Dorsolateral prefrontal cortex (tissue), 120 donors: ENCODE measurements at regions of chr9 and their contacts with region 1.

Region 1: GRCh38 chr9:134738869-134739659 is 97.5 kb downstream of the COL5A1 start:
- DNase-seq: peak; percentile 69 to 90 (median 83)
- H3K4me3 ChIP-seq: no peak overlapping the region
- H3K27ac ChIP-seq: peak overlapping the region in 1 of 59 donors; percentile 26
- H3K27me3 ChIP-seq: no peaks in the 10 kb centered on the region
- CTCF ChIP-seq: peak; percentile 76 to 97 (median 92)

Region 2: DNA sequence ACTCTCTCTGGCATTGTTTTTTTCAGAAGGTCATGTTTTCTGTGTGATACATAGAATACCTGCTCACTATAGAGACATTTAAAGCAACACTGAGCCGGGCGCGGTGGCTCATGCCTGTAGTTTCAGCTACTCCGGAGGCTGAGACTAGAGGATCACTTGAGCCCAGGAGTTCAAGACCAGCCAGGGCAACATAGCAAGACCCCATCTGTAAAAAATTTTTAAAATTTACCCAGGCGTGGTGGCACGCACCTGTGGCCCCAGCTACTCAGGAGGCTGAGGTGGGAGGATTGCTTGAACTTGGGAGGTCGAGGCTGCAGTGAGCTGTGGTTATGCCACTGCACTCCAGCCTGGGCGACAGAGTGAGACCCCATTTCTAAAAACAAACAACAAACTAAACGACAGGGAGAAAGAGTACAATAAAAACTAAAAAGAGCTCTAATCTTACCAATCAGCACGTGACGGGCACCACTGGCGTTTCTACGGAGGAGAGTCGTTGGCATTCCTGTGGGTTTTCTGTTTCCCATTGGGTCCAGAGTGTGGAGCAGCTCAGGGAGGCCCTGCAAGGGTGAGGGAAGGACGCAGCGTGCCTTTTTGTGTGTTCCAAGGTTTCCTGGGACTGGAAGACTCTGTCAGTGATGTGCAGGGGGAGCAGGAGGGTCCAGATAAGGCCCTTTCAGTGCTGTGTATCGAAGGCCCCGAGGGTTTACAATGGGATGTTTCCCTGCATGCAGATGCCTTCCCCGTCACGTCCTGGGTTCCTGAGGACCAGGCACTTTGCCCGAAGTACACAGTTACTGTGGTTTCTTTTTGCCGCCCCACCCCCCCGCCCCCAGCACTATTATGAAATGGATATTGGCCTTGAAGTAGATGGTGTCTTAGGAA is 567.5 kb before region 1 on chr9:
- intact Hi-C with region 1: loop called (anchors 5 to 10 kb)
- DNase-seq: no peak
- H3K4me3 ChIP-seq: no peak overlapping the region
- H3K27ac ChIP-seq: peak overlapping the region in 2 of 59 donors; percentile 47 to 65
- H3K27me3 ChIP-seq: peaks cover 0 to 22% (median 0%) of the 10 kb centered on the region in 45 donors
- CTCF ChIP-seq: no peak

Region 3: DNA sequence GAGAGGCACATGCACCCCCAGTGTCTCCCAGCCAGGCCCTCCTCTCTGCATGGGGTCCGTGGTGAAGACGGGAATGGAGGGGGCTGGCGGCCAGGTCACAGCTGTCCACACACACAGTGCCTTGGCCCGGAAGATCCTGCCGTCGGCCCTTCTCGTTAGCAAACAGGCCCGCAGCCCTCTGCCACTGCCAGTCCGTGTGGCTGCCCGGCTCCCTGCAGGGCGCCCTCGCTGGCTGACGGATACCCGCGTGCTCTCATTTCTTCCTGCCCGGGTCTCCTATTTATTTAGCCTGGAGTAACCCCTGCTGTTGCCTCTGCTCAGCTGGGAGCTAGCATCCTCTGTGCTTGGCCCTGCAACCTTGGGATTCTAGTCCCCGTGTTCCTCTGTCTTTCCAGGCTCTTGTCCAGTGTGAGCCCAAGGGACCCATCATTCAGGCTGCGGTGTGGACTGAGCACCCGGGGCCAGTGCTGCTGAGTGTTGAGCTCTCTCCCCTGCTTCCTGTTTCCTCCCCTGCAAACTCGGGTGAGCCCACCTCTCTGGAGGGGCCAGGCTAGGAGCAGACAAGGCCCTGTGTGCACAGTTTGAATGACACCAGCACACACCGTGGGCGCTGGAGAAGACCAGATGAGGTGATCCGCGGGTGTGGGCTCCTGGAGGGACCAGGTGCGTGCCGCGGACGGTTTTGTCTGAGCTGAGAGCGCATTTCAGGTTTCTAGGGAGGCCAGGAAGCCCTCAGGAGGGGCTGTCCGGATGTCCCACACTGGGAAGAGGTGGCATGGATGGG is 560.1 kb before region 1 on chr9:
- intact Hi-C with region 1: loop called (anchors 5 to 10 kb)
- DNase-seq: peak in 3 of 10 donors; percentile 17 to 46 (median 45)
- H3K4me3 ChIP-seq: no peak overlapping the region
- H3K27ac ChIP-seq: no peak overlapping the region
- H3K27me3 ChIP-seq: peaks cover 0 to 29% (median 0%) of the 10 kb centered on the region in 45 donors
- CTCF ChIP-seq: no peak

Region 4: GRCh38 chr9:134449221-134449894 is 289.7 kb before region 1 on chr9:
- intact Hi-C with region 1: loop called (anchors 1 to 2 kb)
- DNase-seq: peak; percentile 75 to 96 (median 92)
- H3K4me3 ChIP-seq: no peak overlapping the region
- H3K27ac ChIP-seq: peak overlapping the region in 16 of 59 donors; percentile 3 to 65 (median 29)
- H3K27me3 ChIP-seq: no peaks in the 10 kb centered on the region
- CTCF ChIP-seq: peak; percentile 63 to 98 (median 92)

Region 5: DNA sequence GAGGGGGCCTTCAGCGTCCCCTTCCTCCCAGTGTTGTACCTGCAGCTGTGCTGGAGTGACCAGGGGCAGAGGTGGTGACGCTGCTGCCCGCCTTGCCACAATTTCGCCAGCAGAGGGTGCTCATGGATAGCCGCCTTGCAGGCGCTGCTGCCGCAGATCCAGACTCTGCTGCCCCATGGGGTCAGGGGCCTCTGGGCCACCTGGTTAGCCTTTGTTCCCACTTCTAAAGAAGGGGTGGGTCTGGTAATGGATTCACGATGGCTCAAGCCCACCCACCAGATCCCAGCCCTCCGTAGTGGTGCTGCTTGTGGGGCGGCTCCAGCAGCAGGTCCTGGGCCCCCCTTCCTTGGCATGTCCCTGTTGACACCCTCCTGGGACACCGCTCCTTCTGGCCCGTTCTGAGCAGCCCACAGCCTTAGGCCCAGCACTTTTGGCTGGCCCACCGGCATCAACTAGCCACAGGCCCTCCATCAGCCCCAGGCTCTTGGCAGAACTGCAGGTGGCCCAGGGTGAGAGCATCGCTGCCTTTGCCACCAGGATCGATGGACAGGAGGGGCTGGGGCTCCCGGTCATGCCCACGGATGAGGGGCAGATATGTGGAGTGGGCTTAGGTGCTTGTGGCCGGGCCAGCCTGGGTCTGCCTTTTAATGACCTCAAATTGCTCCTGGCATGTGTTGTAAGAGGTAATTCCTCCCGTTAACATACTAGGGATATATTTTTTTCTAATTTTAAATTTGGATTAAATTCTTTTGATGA is 40.3 kb before region 1 on chr9:
- intact Hi-C with region 1: loop called (anchors 1 to 2 kb)
- DNase-seq: peak in 9 of 10 donors; percentile 43 to 81 (median 55)
- H3K4me3 ChIP-seq: no peak overlapping the region
- H3K27ac ChIP-seq: no peak overlapping the region
- H3K27me3 ChIP-seq: no peaks in the 10 kb centered on the region
- CTCF ChIP-seq: peak; percentile 41 to 93 (median 87)

Region 6: GRCh38 chr9:134852906-134853654 is 114.0 kb after region 1 on chr9:
- intact Hi-C with region 1: no loop called
- DNase-seq: peak in 1 of 10 donors; percentile 34
- H3K4me3 ChIP-seq: no peak overlapping the region
- H3K27ac ChIP-seq: no peak overlapping the region
- H3K27me3 ChIP-seq: peaks cover 0 to 12% (median 0%) of the 10 kb centered on the region in 45 donors
- CTCF ChIP-seq: no peak

Region 7: DNA sequence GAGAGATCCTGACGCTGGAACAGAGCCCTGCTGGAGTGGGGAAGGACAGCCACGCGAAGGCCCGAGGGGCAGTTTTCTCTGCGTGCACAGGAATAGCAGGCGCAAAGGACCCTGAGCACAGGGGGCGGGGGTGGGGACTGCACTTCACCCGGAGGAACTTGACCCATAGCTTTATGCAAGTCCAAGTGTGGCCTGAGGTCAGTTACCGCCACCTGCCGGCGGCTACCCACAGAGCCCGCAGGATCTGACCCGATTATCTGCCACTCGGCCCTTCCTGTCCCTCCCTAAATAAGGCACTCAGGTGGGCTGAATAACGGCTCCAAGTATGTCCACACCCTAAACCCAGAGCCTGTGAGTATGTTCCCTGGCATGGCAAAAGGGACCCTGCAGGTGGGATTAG is 244.0 kb after region 1 on chr9:
- intact Hi-C with region 1: no loop called
- DNase-seq: peak in 1 of 10 donors; percentile 26
- H3K4me3 ChIP-seq: no peak overlapping the region
- H3K27ac ChIP-seq: no peak overlapping the region
- H3K27me3 ChIP-seq: peaks cover 0 to 5% (median 0%) of the 10 kb centered on the region in 45 donors
- CTCF ChIP-seq: peak in 11 of 56 donors; percentile 7 to 33 (median 19)